ENCODE measurements at regions of chr3 and their contacts with region 1.

Region 1: GRCh38 chr3:129490242-129491045 is 38.0 kb upstream of the RHO start:
- DNase-seq: peak; percentile 85
- H3K4me3 Mint-ChIP-seq: no peak overlapping the region
- H3K27ac Mint-ChIP-seq: no peak overlapping the region
- H3K4me1 Mint-ChIP-seq: peaks cover 28% of the 10 kb centered on the region
- H3K27me3 Mint-ChIP-seq: no peaks in the 10 kb centered on the region
- CTCF ChIP-seq: peak; percentile 93

Region 2: GRCh38 chr3:129399145-129399894 is 91.1 kb before region 1 on chr3:
- CTCF ChIA-PET with region 1: interaction called, 5 read pairs
- POLR2A ChIA-PET with region 1: no interaction called
- intact Hi-C with region 1: loop called (anchors 1 kb)
- DNase-seq: peak; percentile 97
- H3K4me3 Mint-ChIP-seq: peak overlapping the region; percentile 88
- H3K27ac Mint-ChIP-seq: peak overlapping the region; percentile 97
- H3K4me1 Mint-ChIP-seq: peaks cover 30% of the 10 kb centered on the region
- H3K27me3 Mint-ChIP-seq: no peaks in the 10 kb centered on the region
- CTCF ChIP-seq: peak; percentile 57

Region 3: DNA sequence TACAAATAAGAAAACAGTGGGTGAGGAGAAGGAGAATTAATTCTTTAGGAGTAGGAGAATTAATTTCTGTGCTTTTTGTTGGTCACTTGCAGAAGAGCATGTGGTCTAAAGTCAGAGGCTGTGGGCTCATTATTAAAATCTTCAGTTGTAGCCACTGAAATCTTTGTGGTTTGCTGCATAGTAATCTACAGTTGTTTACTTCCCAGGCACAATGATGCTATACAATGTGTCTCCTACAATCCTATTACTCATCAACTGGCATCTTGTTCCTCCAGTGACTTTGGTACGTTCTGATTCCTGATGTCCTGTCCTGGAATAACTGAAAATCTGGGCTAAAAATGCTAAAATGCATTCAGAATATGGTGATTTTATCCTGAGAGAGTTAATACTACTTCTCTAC is 29.4 kb before region 1 on chr3:
- CTCF ChIA-PET with region 1: interaction called, 5 read pairs
- POLR2A ChIA-PET with region 1: interaction called, 10 read pairs
- intact Hi-C with region 1: no loop called
- DNase-seq: peak; percentile 67
- H3K4me3 Mint-ChIP-seq: no peak overlapping the region
- H3K27ac Mint-ChIP-seq: peak overlapping the region; percentile 96
- H3K4me1 Mint-ChIP-seq: peaks cover 23% of the 10 kb centered on the region
- H3K27me3 Mint-ChIP-seq: no peaks in the 10 kb centered on the region
- CTCF ChIP-seq: no peak

Region 4: GRCh38 chr3:129608087-129608935 is 117.9 kb after region 1 on chr3:
- CTCF ChIA-PET with region 1: interaction called, 5 read pairs
- POLR2A ChIA-PET with region 1: interaction called, 4 read pairs
- intact Hi-C with region 1: loop called (anchors 2 kb)
- DNase-seq: peak; percentile 45
- H3K4me3 Mint-ChIP-seq: peak overlapping the region; percentile 5
- H3K27ac Mint-ChIP-seq: no peak overlapping the region
- H3K4me1 Mint-ChIP-seq: peaks cover 6% of the 10 kb centered on the region
- H3K27me3 Mint-ChIP-seq: no peaks in the 10 kb centered on the region
- CTCF ChIP-seq: no peak

Region 5: GRCh38 chr3:129650256-129650872 is 159.9 kb after region 1 on chr3:
- CTCF ChIA-PET with region 1: interaction called, 13 read pairs
- POLR2A ChIA-PET with region 1: no interaction called
- intact Hi-C with region 1: loop called (anchors 1 kb)
- DNase-seq: peak; percentile 88
- H3K4me3 Mint-ChIP-seq: no peak overlapping the region
- H3K27ac Mint-ChIP-seq: no peak overlapping the region
- H3K4me1 Mint-ChIP-seq: peaks cover 21% of the 10 kb centered on the region
- H3K27me3 Mint-ChIP-seq: no peaks in the 10 kb centered on the region
- CTCF ChIP-seq: peak; percentile 75

Region 6: GRCh38 chr3:129824926-129825541 is 334.6 kb after region 1 on chr3:
- CTCF ChIA-PET with region 1: interaction called, 91 read pairs
- POLR2A ChIA-PET with region 1: interaction called, 4 read pairs
- intact Hi-C with region 1: loop called (anchors 1 kb)
- DNase-seq: peak; percentile 75
- H3K4me3 Mint-ChIP-seq: no peak overlapping the region
- H3K27ac Mint-ChIP-seq: peak overlapping the region; percentile 2
- H3K4me1 Mint-ChIP-seq: peaks cover 11% of the 10 kb centered on the region
- H3K27me3 Mint-ChIP-seq: no peaks in the 10 kb centered on the region
- CTCF ChIP-seq: peak; percentile 64

Region 7: GRCh38 chr3:129934234-129935123 is 444.0 kb after region 1 on chr3:
- CTCF ChIA-PET with region 1: interaction called, 11 read pairs
- POLR2A ChIA-PET with region 1: no interaction called
- intact Hi-C with region 1: no loop called
- DNase-seq: peak; percentile 51
- H3K4me3 Mint-ChIP-seq: peak overlapping the region; percentile 42
- H3K27ac Mint-ChIP-seq: no peak overlapping the region
- H3K4me1 Mint-ChIP-seq: peaks cover 17% of the 10 kb centered on the region
- H3K27me3 Mint-ChIP-seq: no peaks in the 10 kb centered on the region
- CTCF ChIP-seq: peak; percentile 81

Measured in MCF 10A (cell line).